ENCODE measurements at regions of chr12 and their contacts with region 1.

Region 1: GRCh38 chr12:1939801-1940607 is 21.6 kb upstream of the CACNA2D4 start:
- DNase-seq: peak; percentile 77
- H3K4me3 Mint-ChIP-seq: no peak overlapping the region
- H3K27ac Mint-ChIP-seq: no peak overlapping the region
- H3K4me1 Mint-ChIP-seq: peaks cover 2% of the 10 kb centered on the region
- H3K27me3 Mint-ChIP-seq: no peaks in the 10 kb centered on the region

Region 2: GRCh38 chr12:1634590-1635191 is 305.3 kb before region 1 on chr12:
- intact Hi-C with region 1: loop called (anchors 5 kb)
- DNase-seq: peak; percentile 46
- H3K4me3 Mint-ChIP-seq: no peak overlapping the region
- H3K27ac Mint-ChIP-seq: no peak overlapping the region
- H3K4me1 Mint-ChIP-seq: peaks cover 9% of the 10 kb centered on the region
- H3K27me3 Mint-ChIP-seq: peaks cover 41% of the 10 kb centered on the region

Region 3: GRCh38 chr12:1650260-1650977 is 289.6 kb before region 1 on chr12:
- intact Hi-C with region 1: loop called (anchors 1 kb)
- DNase-seq: no peak
- H3K4me3 Mint-ChIP-seq: no peak overlapping the region
- H3K27ac Mint-ChIP-seq: no peak overlapping the region
- H3K4me1 Mint-ChIP-seq: peaks cover 8% of the 10 kb centered on the region
- H3K27me3 Mint-ChIP-seq: peaks cover 35% of the 10 kb centered on the region

Region 4: DNA sequence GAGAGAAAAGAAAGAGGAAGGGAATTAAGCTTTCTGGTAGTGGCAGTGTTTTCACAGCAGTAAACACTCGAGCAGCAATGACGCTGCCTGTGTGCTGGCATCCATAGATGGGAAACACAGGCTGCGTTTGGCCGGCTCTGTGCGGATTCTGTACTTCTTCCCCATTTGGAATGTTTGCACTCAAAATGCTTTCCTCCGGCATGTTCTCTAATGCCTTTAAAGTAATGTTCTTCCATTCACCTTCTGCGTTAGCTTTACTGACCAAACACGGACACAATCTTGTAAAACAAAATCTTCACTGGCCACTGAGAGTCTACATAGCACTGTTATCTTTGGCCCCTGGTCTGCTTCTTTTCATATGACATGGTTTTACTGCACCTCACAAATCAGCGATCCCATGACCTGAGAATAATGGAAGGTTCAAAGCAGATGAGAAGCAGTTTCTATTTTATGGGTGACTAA is 32.9 kb after region 1 on chr12:
- intact Hi-C with region 1: no loop called
- DNase-seq: no peak
- H3K4me3 Mint-ChIP-seq: no peak overlapping the region
- H3K27ac Mint-ChIP-seq: no peak overlapping the region
- H3K4me1 Mint-ChIP-seq: no peaks in the 10 kb centered on the region
- H3K27me3 Mint-ChIP-seq: no peaks in the 10 kb centered on the region

Region 5: GRCh38 chr12:3060778-3061458 is 1120.9 kb after region 1 on chr12:
- intact Hi-C with region 1: no loop called
- DNase-seq: no peak
- H3K4me3 Mint-ChIP-seq: no peak overlapping the region
- H3K27ac Mint-ChIP-seq: no peak overlapping the region
- H3K4me1 Mint-ChIP-seq: no peaks in the 10 kb centered on the region
- H3K27me3 Mint-ChIP-seq: peaks cover 18% of the 10 kb centered on the region

Measured in activated T-helper 2 cell treated with anti-CD3 and anti-CD28 coated beads, Interferon-gamma antibody, Interleukin-2, Interleukin-4, amounts not matched to agents 10 μg/mL and 5 μg/mL and 100 μg/mL, durations not matched to agents 14 hours and 24 hours and 36 hours (primary cell).